ENCODE measurements at regions of chr12 and their contacts with region 1.

Region 1: DNA sequence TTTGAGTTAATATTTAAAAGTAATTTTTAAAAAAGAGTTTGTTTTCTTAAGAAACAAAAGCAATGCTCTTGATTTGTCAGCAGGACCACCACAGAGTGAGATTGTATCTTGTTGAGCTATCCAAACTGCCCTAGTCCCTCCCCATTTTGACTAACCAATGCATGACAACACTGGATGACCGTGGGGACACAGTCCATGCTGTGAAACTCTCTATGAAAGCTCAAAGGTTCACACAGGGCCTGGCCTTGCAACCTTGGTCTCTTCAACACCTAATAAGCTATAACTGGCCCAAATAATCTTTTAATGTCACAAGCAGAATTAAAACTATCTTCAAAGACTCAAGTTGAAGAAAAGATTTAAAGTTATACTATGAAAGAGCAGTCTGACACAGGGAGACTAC is 13.5 kb downstream of the ETFRF1 start:
- DNase-seq: no peak
- ATAC-seq: no peak
- H3K4me3 ChIP-seq: no peak overlapping the region
- H3K27ac ChIP-seq: no peak overlapping the region
- H3K4me1 ChIP-seq: no peaks in the 10 kb centered on the region
- H3K27me3 ChIP-seq: no peaks in the 10 kb centered on the region
- CTCF ChIP-seq: no peak
- POLR2A ChIP-seq: no peak
- RAD21 ChIP-seq: no peak

Region 2: GRCh38 chr12:25386831-25387731 is 178.5 kb after region 1 on chr12:
- CTCF ChIA-PET with region 1: interaction called, 9 read pairs
- POLR2A ChIA-PET with region 1: interaction called, 3 read pairs
- RAD21 ChIA-PET with region 1: interaction called in 1 of 2 experiments, 3 read pairs
- intact Hi-C with region 1: loop called (anchors 1 kb)
- DNase-seq: peak; percentile 84
- ATAC-seq: peak; percentile 42
- H3K4me3 ChIP-seq: peak overlapping the region; percentile 76 to 79
- H3K27ac ChIP-seq: peak overlapping the region; percentile 92
- H3K4me1 ChIP-seq: peaks cover 12 to 31% of the 10 kb centered on the region in 2 experiments
- H3K27me3 ChIP-seq: no peaks in the 10 kb centered on the region
- CTCF ChIP-seq: peak; percentile 78 to 87 (median 79); a peak in 5 of 6 replicates
- POLR2A ChIP-seq: no peak
- RAD21 ChIP-seq: peak; percentile 93

Region 3: DNA sequence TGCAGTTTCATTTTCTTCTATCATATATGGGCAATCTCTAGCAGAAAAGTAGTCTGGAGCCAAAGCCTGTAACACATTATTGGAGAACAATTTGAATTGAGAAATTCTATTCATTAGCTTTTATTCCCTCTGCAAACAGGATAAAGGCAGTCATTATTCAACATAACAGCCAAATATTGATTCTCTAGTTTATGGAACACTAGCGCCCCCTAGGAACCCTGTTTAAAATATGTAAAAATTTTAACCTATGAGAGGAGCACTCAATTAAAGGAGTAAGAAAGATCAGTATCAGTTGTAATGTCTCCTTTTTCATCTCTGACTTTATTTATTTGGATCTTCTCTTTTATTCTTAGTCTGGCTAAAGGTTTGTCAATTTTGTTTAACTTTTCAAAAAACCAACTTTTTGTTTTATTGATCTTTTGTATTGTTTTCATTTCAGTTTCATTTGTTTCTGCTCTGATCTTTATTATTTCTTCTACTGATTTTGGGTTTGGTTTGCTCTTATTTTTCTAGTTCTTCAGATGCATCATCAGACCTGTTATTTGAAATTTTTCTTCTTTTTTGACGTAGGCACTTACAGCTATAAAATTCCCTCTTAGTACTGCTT is 349.4 kb after region 1 on chr12:
- CTCF ChIA-PET with region 1: no interaction called
- POLR2A ChIA-PET with region 1: no interaction called
- RAD21 ChIA-PET with region 1: no interaction called
- intact Hi-C with region 1: loop called (anchors 5 kb)
- DNase-seq: peak; percentile 54
- ATAC-seq: peak; percentile 49
- H3K4me3 ChIP-seq: no peak overlapping the region
- H3K27ac ChIP-seq: no peak overlapping the region
- H3K4me1 ChIP-seq: no peaks in the 10 kb centered on the region
- H3K27me3 ChIP-seq: no peaks in the 10 kb centered on the region
- CTCF ChIP-seq: peak; percentile 60 to 73 (median 60); a peak in 5 of 6 replicates
- POLR2A ChIP-seq: no peak
- RAD21 ChIP-seq: peak; percentile 73

Measured in HCT116 (cell line).